Sigmoid colon (tissue), 7 donors: ENCODE measurements at regions of chr9 and their contacts with region 1.

Region 1: GRCh38 chr9:73183917-73184861 is 32.5 kb downstream of the ANXA1 start:
- DNase-seq: no peak
- H3K4me3 ChIP-seq: no peak overlapping the region
- H3K27ac ChIP-seq: no peak overlapping the region
- H3K4me1 ChIP-seq: peaks cover 0 to 14% (median 7%) of the 10 kb centered on the region in 4 donors
- H3K27me3 ChIP-seq: no peaks in the 10 kb centered on the region
- CTCF ChIP-seq: peak in 3 of 4 experiments; percentile 34 to 49 (median 36)
- EP300 ChIP-seq: no peak
- POLR2A ChIP-seq: no peak

Region 2: DNA sequence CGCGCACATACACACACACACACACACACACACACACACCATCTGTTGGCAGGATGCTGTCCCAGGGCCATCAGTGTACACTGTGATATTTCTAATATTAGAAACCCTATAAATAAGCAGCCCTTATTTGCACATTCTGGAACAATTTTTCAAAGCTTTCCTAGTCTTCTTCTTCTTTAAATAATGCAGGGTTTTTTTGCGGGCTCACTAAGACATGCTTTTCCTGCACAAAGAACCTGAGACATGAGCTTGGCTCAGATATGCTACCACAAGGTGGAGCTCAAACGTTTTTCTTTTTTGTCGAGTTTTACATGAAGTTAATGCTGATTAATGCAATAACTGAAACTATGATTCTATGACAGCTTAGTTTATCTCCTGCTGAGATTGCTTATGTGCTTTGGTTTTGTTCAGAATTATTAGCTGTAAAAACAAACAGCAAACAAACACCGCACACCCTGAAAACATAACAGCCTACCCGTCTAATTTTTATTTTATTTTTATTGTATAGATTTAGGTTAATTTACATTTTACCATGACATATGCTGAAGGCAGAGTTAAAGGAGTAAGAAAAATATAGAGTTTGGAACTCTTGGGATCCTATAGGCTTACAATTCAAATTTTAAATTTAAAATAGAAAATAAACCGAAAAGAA is 327.1 kb before region 1 on chr9:
- intact Hi-C with region 1: loop called (anchors 5 kb)
- DNase-seq: no peak
- H3K4me3 ChIP-seq: no peak overlapping the region
- H3K27ac ChIP-seq: peak overlapping the region in 2 of 4 donors; percentile 19 to 28
- H3K4me1 ChIP-seq: peaks cover 0 to 36% (median 19%) of the 10 kb centered on the region in 4 donors
- H3K27me3 ChIP-seq: no peaks in the 10 kb centered on the region
- CTCF ChIP-seq: peak; percentile 65 to 74 (median 66)
- EP300 ChIP-seq: no peak
- POLR2A ChIP-seq: no peak

Region 3: DNA sequence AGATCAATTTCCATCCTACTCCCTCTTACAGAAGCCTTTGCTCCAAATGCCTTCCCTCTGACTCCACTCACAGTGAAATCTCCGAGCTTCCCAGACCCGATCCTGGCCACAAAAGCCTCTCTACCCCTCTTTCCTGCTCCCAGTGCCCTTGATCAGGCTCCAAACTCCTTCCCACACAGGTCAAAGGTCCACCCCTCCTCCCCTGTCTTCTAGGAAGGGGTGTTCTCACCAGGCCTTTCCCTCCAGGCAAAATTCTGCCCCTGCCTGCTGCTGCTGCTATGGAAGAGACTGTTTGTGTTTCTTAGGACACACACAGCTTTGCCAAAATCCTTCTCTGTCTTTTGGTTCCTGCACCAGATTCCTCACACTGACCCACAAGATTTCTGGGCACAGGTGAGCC is 145.6 kb before region 1 on chr9:
- intact Hi-C with region 1: loop called (anchors 5 kb)
- DNase-seq: peak; percentile 84
- H3K4me3 ChIP-seq: peak overlapping the region in 3 of 4 donors; percentile 1 to 13 (median 4)
- H3K27ac ChIP-seq: peak overlapping the region; percentile 83 to 88 (median 86)
- H3K4me1 ChIP-seq: peaks cover 0 to 53% (median 44%) of the 10 kb centered on the region in 4 donors
- H3K27me3 ChIP-seq: no peaks in the 10 kb centered on the region
- CTCF ChIP-seq: no peak
- EP300 ChIP-seq: no peak
- POLR2A ChIP-seq: no peak

Region 4: GRCh38 chr9:73104342-73104741 is 79.8 kb before region 1 on chr9:
- intact Hi-C with region 1: loop called (anchors 1 kb)
- DNase-seq: no peak
- H3K4me3 ChIP-seq: no peak overlapping the region
- H3K27ac ChIP-seq: no peak overlapping the region
- H3K4me1 ChIP-seq: no peaks in the 10 kb centered on the region
- H3K27me3 ChIP-seq: no peaks in the 10 kb centered on the region
- CTCF ChIP-seq: no peak
- EP300 ChIP-seq: no peak
- POLR2A ChIP-seq: no peak